CD8-positive, alpha-beta T cell (primary cell): ENCODE measurements at regions of chr17 and their contacts with region 1.

Region 1: DNA sequence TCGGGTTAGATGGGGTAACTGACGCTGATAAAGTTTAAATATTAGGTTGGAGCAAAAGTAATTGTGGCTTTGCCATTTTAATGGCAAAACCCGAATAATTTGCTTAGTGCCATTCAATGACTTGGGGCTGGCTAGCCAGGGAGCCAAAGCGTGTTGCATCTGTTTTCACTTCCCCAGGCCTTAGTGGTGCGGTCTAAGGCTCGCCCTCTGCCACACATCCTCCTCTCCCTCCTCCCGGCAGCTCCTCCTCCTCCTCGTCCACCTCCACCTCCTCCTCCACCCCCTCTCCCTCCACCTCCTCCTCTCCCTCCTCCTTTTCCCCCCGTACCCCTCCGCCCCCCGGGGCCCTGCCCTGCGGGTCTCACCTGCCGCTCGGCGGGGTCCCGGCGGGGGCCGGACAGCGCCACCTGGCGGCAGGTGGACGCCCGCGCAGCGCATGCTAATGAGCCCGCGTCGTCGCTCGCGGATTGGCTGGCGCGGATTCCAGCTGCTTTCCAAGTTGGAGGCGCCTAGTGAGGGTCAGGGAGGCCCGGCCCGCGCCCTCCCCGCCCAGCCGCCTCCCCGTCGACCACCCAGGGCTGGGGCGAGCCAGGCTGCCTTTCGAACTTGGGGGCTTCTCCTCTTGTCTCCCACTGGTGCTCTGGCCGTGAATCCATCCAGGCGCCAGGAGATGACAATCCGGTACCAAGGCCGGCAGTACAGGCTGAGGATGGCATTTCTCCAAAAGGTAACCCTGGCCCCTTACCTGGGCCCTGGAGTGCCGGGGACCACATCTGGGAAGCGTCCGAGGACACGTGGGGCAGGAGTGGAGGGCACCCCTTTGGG is 36.6 kb upstream of the RGS9 start:
- DNase-seq: peak; percentile 62 to 90 (median 82)
- ATAC-seq: peak; percentile 87
- H3K4me3 ChIP-seq: peak overlapping the region; percentile 38 to 62
- H3K4me3 Mint-ChIP-seq: peak overlapping the region; percentile 84
- H3K27ac ChIP-seq: peak overlapping the region; percentile 36 to 65
- H3K27ac Mint-ChIP-seq: peak overlapping the region; percentile 88
- H3K4me1 ChIP-seq: peaks cover 11% of the 10 kb centered on the region
- H3K4me1 Mint-ChIP-seq: peaks cover 19% of the 10 kb centered on the region
- H3K27me3 ChIP-seq: no peaks in the 10 kb centered on the region
- H3K27me3 Mint-ChIP-seq: no peaks in the 10 kb centered on the region
- CTCF ChIP-seq: peak; percentile 72

Region 2: GRCh38 chr17:64920026-64920418 is 180.5 kb before region 1 on chr17:
- CTCF ChIA-PET with region 1: interaction called, 7 read pairs
- POLR2A ChIA-PET with region 1: interaction called, 4 read pairs
- intact Hi-C with region 1: loop called (anchors 1 to 10 kb)
- DNase-seq: peak in 3 of 9 experiments; percentile 23 to 47 (median 25)
- ATAC-seq: no peak
- H3K4me3 ChIP-seq: peak overlapping the region; percentile 59 to 73
- H3K4me3 Mint-ChIP-seq: peak overlapping the region; percentile 88
- H3K27ac ChIP-seq: peak overlapping the region; percentile 63 to 72
- H3K27ac Mint-ChIP-seq: peak overlapping the region; percentile 92
- H3K4me1 ChIP-seq: peaks cover 4% of the 10 kb centered on the region
- H3K4me1 Mint-ChIP-seq: peaks cover 3% of the 10 kb centered on the region
- H3K27me3 ChIP-seq: no peaks in the 10 kb centered on the region
- H3K27me3 Mint-ChIP-seq: no peaks in the 10 kb centered on the region
- CTCF ChIP-seq: no peak

Region 3: GRCh38 chr17:64975329-64976087 is 125.0 kb before region 1 on chr17:
- CTCF ChIA-PET with region 1: interaction called, 5 read pairs
- POLR2A ChIA-PET with region 1: interaction called, 7 read pairs
- intact Hi-C with region 1: loop called in 1 of 2 experiments (anchors 5 kb)
- DNase-seq: peak; percentile 94 to 100 (median 97)
- ATAC-seq: peak; percentile 76
- H3K4me3 ChIP-seq: peak overlapping the region; percentile 68 to 71
- H3K4me3 Mint-ChIP-seq: peak overlapping the region; percentile 97
- H3K27ac ChIP-seq: peak overlapping the region; percentile 93 to 97
- H3K27ac Mint-ChIP-seq: peak overlapping the region; percentile 100
- H3K4me1 ChIP-seq: peaks cover 16% of the 10 kb centered on the region
- H3K4me1 Mint-ChIP-seq: peaks cover 37% of the 10 kb centered on the region
- H3K27me3 ChIP-seq: no peaks in the 10 kb centered on the region
- H3K27me3 Mint-ChIP-seq: no peaks in the 10 kb centered on the region
- CTCF ChIP-seq: no peak

Region 4: GRCh38 chr17:65064452-65065019 is 36.0 kb before region 1 on chr17:
- CTCF ChIA-PET with region 1: interaction called, 11 read pairs
- POLR2A ChIA-PET with region 1: no interaction called
- intact Hi-C with region 1: no loop called
- DNase-seq: no peak
- ATAC-seq: no peak
- H3K4me3 ChIP-seq: no peak overlapping the region
- H3K4me3 Mint-ChIP-seq: no peak overlapping the region
- H3K27ac ChIP-seq: no peak overlapping the region
- H3K27ac Mint-ChIP-seq: no peak overlapping the region
- H3K4me1 ChIP-seq: no peaks in the 10 kb centered on the region
- H3K4me1 Mint-ChIP-seq: no peaks in the 10 kb centered on the region
- H3K27me3 ChIP-seq: no peaks in the 10 kb centered on the region
- H3K27me3 Mint-ChIP-seq: peaks cover 2% of the 10 kb centered on the region
- CTCF ChIP-seq: no peak

Region 5: DNA sequence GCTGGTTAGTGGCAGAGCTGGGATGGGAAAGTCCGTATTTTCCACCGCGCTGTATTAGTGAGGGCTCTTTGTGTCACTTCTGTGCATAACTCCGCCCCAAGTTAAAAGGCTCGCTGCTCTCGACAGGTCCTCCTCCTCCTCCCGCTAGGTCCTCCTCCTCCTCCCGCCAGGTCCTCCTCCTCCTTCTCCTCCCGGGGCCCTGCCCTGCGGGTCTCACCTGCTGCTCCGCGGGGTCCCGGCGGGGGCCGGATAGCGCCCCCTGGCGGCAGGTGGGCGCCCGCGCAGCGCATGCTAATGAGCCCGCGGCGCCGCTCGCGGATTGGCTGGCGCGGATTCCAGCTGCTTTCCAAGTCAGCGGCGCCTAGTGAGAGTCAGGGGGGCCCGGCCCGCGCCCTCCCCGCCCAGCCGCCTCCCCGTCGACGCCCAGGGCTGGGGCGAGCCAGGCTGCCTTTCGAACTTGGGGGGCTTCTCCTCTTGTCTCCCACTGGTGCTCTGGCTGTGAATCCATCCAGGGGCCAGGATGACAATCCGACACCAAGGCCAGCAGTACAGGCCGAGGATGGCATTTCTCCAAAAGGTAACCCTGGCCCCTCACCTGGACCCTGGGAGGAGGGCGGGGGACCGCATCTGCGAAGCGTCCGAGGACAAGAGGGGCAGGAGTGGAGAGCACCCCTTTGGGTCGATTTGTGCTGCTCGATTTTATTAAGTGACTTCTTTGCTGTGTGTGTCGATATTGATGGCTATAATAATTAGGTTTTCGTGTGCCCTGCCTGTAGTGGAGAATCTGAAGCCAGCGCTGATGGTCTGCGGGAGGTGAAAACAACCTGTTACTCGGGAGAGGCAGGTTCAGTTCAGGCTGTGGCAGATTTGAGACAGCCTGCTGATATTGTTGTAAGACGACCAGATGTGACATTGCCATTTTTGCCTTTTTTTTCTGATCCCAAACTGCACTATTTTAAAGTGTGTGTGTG is 36.8 kb after region 1 on chr17 and contains the start of gene RGS9:
- CTCF ChIA-PET with region 1: interaction called, 8 read pairs
- POLR2A ChIA-PET with region 1: no interaction called
- intact Hi-C with region 1: loop called (anchors 1 kb)
- DNase-seq: peak; percentile 68 to 93 (median 86)
- ATAC-seq: peak; percentile 99
- H3K4me3 ChIP-seq: peak within 1 kb of the TSS; percentile 59 to 65
- H3K4me3 Mint-ChIP-seq: peak within 1 kb of the TSS; percentile 77
- H3K27ac ChIP-seq: peak within 1 kb of the TSS in 1 of 2 experiments; percentile 43
- H3K27ac Mint-ChIP-seq: no peak within 1 kb of the TSS
- H3K4me1 ChIP-seq: peaks cover 24% of the 10 kb centered on the region
- H3K4me1 Mint-ChIP-seq: peaks cover 28% of the 10 kb centered on the region
- H3K27me3 ChIP-seq: peaks cover 0 to 2% of the 10 kb centered on the region in 2 experiments
- H3K27me3 Mint-ChIP-seq: peaks cover 16% of the 10 kb centered on the region
- CTCF ChIP-seq: peak; percentile 97
- total RNA-seq, gene RGS9: 1.1 to 1.6 TPM